Endothelial cell of umbilical vein (primary cell): ENCODE measurements at regions of chr17 and their contacts with region 1.

Region 1: GRCh38 chr17:44223541-44224071 is 4.1 kb upstream of the UBTF start:
- DNase-seq: peak; percentile 97
- H3K4me3 ChIP-seq: no peak overlapping the region
- H3K27ac ChIP-seq: peak overlapping the region; percentile 4
- H3K4me1 ChIP-seq: peaks cover 28% of the 10 kb centered on the region
- H3K27me3 ChIP-seq: no peaks in the 10 kb centered on the region
- CTCF ChIP-seq: no peak
- POLR2A ChIP-seq: peak; percentile 26

Region 2: GRCh38 chr17:44155488-44155887 is 68.1 kb before region 1 on chr17:
- CTCF ChIA-PET with region 1: no interaction called
- POLR2A ChIA-PET with region 1: no interaction called
- dilution Hi-C with region 1: no loop called
- intact Hi-C with region 1: no loop called
- DNase-seq: no peak
- H3K4me3 ChIP-seq: no peak overlapping the region
- H3K27ac ChIP-seq: no peak overlapping the region
- H3K4me1 ChIP-seq: no peaks in the 10 kb centered on the region
- H3K27me3 ChIP-seq: no peaks in the 10 kb centered on the region
- CTCF ChIP-seq: no peak
- POLR2A ChIP-seq: no peak

Region 3: DNA sequence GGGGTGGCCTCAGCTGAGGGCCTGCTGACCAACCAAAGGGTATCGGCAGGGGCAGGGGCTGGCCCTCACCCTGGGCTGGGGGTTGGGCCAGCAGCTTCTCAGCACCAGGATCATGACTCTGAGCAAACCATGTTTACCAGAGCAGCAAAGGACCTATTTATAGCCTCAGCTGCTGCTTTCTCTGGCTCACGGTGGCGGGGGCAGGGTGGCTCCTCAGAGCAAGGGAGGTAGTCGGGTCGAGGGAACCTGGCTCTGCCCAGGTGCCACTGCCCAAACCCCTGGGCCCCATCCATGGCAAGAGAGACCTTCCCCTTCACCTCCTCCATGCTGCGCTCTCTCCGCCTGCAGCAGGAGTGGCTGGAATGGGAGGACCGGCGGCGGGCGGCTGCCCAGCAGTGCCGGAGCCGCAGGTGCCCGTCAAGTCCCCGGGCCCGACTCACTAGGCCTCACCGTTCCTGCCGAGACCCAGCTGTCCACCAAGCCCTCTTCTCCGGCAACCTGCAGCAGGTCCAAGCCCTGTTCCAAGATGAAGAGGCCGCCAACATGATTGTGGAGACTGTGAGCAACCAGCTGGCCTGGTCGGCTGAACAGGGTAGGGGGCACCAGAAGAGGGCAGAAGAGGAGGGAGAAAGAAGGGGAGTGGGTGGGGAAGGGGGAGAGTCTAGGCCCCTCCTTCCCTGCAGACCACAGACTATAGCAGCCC is 53.0 kb before region 1 on chr17 and contains the start of gene ASB16:
- CTCF ChIA-PET with region 1: no interaction called
- POLR2A ChIA-PET with region 1: no interaction called
- dilution Hi-C with region 1: no loop called
- intact Hi-C with region 1: no loop called
- DNase-seq: no peak
- H3K4me3 ChIP-seq: no peak within 1 kb of the TSS
- H3K27ac ChIP-seq: no peak within 1 kb of the TSS
- H3K4me1 ChIP-seq: no peaks in the 10 kb centered on the region
- H3K27me3 ChIP-seq: no peaks in the 10 kb centered on the region
- CTCF ChIP-seq: no peak
- POLR2A ChIP-seq: no peak
- total RNA-seq, gene ASB16: not detected in 2 replicates

Region 4: GRCh38 chr17:44191941-44192496 is 31.6 kb before region 1 on chr17:
- CTCF ChIA-PET with region 1: no interaction called
- POLR2A ChIA-PET with region 1: no interaction called
- dilution Hi-C with region 1: no loop called
- intact Hi-C with region 1: no loop called
- DNase-seq: no peak
- H3K4me3 ChIP-seq: no peak overlapping the region
- H3K27ac ChIP-seq: no peak overlapping the region
- H3K4me1 ChIP-seq: peaks cover 7% of the 10 kb centered on the region
- H3K27me3 ChIP-seq: no peaks in the 10 kb centered on the region
- CTCF ChIP-seq: no peak
- POLR2A ChIP-seq: peak; percentile 15

Region 5: DNA sequence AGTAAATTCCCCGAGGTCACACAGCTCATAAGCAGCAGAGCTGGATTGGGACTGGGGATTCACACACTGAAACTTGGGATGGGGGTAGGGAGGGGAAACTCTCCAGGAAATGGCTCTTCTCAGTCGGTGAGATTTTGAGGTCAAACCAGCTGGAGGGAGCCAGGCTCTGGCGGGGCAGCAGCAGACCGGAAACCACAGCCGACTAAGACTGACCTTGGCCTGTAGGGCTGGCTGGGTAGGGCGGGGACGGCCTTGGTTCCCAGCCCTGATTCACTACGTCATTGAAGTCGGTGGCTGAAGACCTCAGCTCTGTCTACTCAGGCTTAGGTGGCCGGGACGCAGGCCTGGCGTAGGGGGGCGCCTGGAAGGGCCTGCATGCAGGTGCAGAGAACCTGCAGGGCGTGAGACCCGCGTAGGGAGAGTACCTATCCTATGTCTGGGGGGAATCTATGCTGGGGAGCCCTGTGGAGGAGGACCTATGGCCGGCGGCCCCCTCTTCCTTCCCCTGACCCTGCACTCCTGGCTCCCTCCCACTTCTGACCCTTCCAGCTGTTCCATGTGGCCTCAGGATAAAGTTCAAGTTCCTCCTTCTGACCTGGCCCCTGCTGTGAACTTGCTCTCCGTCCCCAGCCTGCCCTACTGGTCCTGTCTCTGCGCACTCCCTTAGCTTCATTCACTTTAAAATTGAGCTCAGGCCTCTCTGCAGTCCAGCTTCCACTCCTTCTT is 56.2 kb after region 1 on chr17:
- CTCF ChIA-PET with region 1: interaction called, 3 read pairs
- POLR2A ChIA-PET with region 1: no interaction called
- dilution Hi-C with region 1: no loop called
- intact Hi-C with region 1: loop called (anchors 1 kb)
- DNase-seq: peak; percentile 89
- H3K4me3 ChIP-seq: no peak overlapping the region
- H3K27ac ChIP-seq: peak overlapping the region; percentile 69
- H3K4me1 ChIP-seq: peaks cover 15% of the 10 kb centered on the region
- H3K27me3 ChIP-seq: no peaks in the 10 kb centered on the region
- CTCF ChIP-seq: no peak
- POLR2A ChIP-seq: peak; percentile 17